Psoas muscle (tissue), 8 donors: ENCODE measurements at regions of chr1 and their contacts with region 1.

Region 1: DNA sequence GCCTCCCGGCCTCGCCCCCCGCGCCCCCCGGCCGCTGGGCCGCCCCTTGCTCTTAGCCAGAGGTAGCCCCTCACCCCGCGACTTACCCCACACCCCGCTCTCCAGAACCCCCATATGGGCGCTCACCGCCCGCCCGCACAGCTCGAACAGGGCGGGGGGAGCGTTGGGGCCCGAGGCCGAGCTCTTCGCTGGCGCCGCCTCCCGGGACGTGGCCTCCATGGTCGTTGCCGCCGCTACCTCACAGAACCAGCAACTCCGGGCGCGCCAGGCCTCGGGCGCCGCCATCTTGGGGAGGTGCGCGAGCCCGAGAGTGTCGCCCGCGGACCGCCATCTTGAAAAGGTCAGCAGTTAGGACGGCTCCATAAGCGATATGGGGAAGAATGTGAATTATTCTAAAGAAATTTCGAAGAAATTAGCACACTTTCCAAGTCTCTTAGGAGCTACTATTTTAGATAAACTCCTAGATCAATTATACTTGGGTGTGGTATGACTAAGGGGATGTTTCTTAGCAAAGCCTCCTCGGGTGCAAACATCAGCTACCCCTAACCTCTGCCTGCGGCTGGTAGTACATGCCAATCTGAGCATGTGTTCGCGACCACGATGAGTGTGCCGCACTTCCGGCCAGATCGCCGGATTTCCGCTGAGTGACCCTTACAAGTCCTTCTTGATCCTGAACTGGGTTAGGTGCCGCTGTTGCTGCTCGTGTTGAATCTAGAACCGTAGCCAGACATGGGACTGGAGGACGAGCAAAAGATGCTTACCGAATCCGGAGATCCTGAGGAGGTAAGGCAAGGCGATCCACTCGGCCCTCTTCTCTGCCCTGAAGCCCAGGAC is at the starts of genes LRRC41 and UQCRH:
- DNase-seq: peak; percentile 94 to 98
- ATAC-seq: peak; percentile 90 to 93 (median 92)
- H3K4me3 ChIP-seq: peak within 1 kb of the TSS; percentile 100
- H3K27ac ChIP-seq: peak within 1 kb of the TSS; percentile 98
- H3K4me1 ChIP-seq: peaks cover 65% of the 10 kb centered on the region
- H3K27me3 ChIP-seq: no peaks in the 10 kb centered on the region
- CTCF ChIP-seq: no peak
- total RNA-seq, gene LRRC41: 52.9 to 76.7 (median 60.1) TPM
- total RNA-seq, gene UQCRH: 267 to 440 (median 370) TPM

Region 2: GRCh38 chr1:46274223-46275029 is 28.8 kb before region 1 on chr1:
- intact Hi-C with region 1: no loop called
- DNase-seq: no peak
- ATAC-seq: peak in 2 of 4 donors; percentile 14 to 25
- H3K4me3 ChIP-seq: no peak overlapping the region
- H3K27ac ChIP-seq: peak overlapping the region; percentile 23
- H3K4me1 ChIP-seq: no peaks in the 10 kb centered on the region
- H3K27me3 ChIP-seq: no peaks in the 10 kb centered on the region
- CTCF ChIP-seq: no peak

Region 3: DNA sequence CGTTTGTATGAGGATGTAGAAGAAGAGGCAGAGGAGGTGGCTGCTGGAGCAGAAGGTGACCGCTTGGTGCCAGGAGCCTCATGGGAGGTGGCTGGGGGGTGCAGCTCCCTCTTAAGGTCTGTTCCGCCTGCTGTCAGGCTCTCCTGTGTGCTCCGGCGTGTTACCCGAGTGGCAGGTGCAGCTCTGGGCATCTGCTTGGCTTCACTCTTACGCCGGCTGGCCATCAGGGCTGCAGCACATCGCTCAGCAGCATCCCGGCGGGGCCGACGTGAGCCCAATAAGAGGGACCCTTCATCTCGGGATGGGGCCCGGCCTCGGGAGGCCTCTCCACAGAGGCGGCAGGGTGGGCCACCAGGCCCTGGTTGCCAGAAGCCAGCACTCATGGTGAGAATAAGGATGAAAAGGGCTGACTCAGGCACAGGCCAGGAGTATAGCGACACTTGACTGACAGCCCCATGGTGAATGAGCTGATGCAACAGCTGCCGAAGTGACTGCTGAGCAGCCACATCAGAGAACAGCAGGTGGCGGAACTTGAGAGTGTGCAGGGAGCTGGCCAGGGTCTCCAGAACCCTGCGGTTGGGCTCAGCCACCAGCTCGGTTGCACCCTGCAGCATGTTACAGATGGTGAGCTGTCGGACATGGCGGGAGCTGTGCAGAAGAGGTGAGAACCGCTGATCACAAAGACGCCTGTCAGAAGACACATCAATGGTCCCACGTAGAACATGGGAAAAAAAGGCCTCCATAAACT is 17.4 kb before region 1 on chr1:
- intact Hi-C with region 1: loop called in 1 of 2 experiments (anchors 2 kb)
- DNase-seq: peak; percentile 76 to 90
- ATAC-seq: peak; percentile 94 to 95 (median 94)
- H3K4me3 ChIP-seq: no peak overlapping the region
- H3K27ac ChIP-seq: peak overlapping the region; percentile 89
- H3K4me1 ChIP-seq: peaks cover 53% of the 10 kb centered on the region
- H3K27me3 ChIP-seq: no peaks in the 10 kb centered on the region
- CTCF ChIP-seq: no peak

Region 4: DNA sequence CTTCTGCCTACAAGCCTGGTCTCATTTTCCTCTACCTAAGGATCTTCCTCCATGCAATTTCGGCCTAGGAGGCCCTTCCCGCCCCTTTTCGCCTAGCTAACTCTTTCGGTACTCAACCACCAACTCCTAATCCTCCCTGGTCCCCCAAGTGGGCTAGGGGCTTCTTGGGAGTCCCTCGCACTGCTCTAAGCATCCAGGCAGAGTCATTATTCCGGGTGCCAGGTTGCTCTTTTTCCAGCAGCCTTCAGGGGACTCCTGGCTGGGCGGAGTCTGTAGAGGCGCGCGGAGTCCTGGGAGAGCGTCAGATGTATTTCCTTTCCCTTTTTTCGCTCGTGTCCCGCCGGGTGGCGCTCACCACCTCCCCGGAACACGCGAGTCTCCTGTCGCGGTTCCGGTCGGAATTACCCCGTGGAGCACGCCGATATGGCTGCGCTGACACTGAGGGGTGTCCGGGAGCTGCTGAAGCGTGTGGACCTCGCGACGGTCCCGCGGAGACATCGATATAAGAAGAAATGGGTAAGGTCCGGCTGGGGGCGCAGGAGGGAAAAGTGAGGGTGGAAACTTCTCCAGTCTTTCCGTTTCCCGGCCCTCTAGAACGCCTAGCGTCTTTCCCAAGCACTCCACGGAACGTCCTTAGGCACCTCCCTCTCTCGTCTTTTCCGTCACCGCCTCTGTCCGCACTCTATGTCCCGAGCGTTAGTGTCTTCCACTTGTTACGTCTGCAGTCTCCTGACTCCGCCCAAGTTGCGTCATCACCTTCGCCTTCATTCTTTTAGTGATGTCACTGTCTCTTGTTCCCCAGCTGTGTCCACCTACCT is 37.4 kb after region 1 on chr1 and contains the start of gene NSUN4:
- intact Hi-C with region 1: loop called in 1 of 2 experiments (anchors 1 kb)
- DNase-seq: peak; percentile 93 to 96
- ATAC-seq: peak; percentile 94 to 96 (median 95)
- H3K4me3 ChIP-seq: peak within 1 kb of the TSS; percentile 80
- H3K27ac ChIP-seq: peak within 1 kb of the TSS; percentile 99
- H3K4me1 ChIP-seq: peaks cover 8% of the 10 kb centered on the region
- H3K27me3 ChIP-seq: no peaks in the 10 kb centered on the region
- CTCF ChIP-seq: peak; percentile 61
- total RNA-seq, gene NSUN4: 13.3 to 25.3 (median 20.9) TPM